AG04449 (cell line): ENCODE measurements at regions of chr3 and their contacts with region 1.

Region 1: DNA sequence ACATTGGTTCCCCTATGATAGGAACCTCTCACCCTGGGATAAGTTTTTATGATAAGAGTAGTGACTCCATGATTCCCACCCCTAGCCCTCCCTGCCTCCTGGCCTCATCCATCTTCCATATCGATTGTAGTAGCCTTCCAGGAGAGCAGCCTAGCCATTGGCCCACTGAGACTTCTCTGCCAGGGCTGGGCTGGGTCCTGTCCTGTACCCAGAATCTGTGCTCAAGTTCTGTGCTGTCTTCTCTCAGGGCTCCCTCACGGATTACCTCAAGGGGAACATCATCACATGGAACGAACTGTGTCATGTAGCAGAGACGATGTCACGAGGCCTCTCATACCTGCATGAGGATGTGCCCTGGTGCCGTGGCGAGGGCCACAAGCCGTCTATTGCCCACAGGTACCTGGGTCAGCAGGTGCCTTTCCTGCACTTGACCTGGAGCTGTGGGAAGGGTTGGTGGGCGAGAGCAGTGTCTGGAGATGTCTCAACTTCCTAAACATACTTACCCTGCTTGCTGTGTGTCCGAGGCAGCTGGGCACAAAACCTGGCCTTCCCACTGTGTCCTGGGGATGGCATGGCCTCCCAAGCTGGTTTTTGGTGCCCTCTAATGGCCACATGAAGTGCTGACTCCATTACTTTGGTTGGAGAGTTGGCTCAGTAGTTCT is 16.6 kb upstream of the EXOG start:
- DNase-seq: no peak
- H3K4me3 ChIP-seq: no peak overlapping the region
- CTCF ChIP-seq: peak; percentile 86

Region 2: GRCh38 chr3:38004415-38005076 is 475.0 kb before region 1 on chr3:
- CTCF ChIA-PET with region 1: interaction called, 15 read pairs
- POLR2A ChIA-PET with region 1: no interaction called
- DNase-seq: no peak
- H3K4me3 ChIP-seq: no peak overlapping the region
- CTCF ChIP-seq: peak; percentile 75

Region 3: DNA sequence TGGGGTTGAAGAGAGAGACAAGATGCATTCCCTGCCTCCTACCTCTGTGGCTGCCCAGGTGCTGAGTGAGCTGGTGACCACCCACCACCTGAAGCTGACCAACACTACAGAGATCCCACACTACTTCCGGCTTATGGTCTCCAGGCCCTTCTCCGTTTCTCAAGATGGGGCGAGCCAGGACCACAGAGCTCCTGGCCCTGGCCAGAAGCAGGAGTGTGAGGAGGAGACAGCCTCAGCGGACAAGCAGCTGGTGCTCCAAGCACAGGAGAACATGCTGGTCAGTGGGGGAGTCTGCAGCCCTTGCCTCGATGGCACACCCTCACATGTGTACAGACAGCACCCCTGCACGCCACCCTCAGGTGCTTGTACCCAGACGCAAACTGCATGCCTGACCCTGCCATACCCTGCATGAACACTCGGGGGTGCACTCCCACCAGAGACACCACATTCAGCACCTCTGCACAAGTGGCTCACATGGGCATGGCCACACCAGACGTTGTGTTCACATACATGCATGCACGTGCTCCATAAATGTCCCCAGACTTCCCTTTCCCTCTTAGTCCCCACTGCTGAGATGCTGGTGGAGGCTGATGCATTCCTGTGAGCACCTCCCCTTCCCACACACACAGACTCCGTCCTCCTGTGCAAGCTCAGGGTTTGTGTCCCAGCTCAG is 361.7 kb before region 1 on chr3:
- CTCF ChIA-PET with region 1: interaction called, 35 read pairs
- POLR2A ChIA-PET with region 1: no interaction called
- DNase-seq: no peak
- H3K4me3 ChIP-seq: no peak overlapping the region
- CTCF ChIP-seq: peak; percentile 84

Region 4: DNA sequence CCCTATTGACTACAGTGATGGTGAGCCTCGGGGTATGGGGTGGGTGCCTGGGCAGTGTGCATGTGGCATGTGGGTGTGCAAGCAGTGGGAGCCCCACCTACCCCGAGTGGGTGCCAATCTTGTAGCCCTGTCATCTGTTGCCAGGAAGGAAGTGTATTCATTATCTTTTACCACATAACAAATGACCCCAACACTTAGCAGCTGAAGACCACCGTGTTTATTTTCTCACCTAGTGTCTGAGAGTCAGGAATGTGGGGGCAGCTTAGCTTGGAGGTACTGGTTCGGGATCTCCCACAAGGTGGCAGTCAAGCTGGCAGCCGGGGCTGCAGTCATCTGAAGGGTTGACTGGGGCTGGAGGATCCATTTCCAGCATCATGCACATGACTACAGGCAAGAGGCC is 111.3 kb before region 1 on chr3:
- CTCF ChIA-PET with region 1: interaction called, 10 read pairs
- POLR2A ChIA-PET with region 1: no interaction called
- DNase-seq: no peak
- H3K4me3 ChIP-seq: no peak overlapping the region
- CTCF ChIP-seq: no peak

Region 5: GRCh38 chr3:38458796-38459498 is 20.6 kb before region 1 on chr3:
- CTCF ChIA-PET with region 1: interaction called, 10 read pairs
- POLR2A ChIA-PET with region 1: no interaction called
- DNase-seq: no peak
- H3K4me3 ChIP-seq: no peak overlapping the region
- CTCF ChIP-seq: no peak

Region 6: DNA sequence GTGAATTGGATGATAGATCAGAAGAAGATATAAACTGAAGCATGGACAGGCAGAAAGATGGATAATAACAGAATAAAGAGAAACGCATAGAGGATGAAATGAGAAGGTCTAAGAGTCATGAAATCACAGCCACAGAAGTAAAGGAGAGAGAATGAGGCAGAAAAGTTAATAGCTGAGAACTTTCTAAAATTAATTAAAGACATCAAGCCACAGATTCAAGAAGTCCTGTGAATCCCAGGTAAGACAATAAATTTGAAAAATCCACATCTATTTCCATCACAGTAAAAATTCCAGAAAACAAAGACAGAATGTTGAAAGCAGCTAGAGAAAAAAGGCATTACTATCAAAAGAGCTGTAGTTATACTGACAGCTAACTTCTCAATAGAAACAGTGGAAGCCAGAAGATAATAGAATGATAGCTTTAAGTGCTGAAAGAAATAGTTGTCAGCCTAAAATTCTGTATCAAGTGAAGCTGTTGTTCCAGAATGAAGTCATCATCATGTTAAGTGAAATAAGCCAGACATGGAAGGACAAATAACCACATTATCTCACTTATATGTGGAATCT is 13.9 kb before region 1 on chr3:
- CTCF ChIA-PET with region 1: interaction called, 60 read pairs
- POLR2A ChIA-PET with region 1: no interaction called
- DNase-seq: no peak
- H3K4me3 ChIP-seq: no peak overlapping the region
- CTCF ChIP-seq: no peak

Region 7: DNA sequence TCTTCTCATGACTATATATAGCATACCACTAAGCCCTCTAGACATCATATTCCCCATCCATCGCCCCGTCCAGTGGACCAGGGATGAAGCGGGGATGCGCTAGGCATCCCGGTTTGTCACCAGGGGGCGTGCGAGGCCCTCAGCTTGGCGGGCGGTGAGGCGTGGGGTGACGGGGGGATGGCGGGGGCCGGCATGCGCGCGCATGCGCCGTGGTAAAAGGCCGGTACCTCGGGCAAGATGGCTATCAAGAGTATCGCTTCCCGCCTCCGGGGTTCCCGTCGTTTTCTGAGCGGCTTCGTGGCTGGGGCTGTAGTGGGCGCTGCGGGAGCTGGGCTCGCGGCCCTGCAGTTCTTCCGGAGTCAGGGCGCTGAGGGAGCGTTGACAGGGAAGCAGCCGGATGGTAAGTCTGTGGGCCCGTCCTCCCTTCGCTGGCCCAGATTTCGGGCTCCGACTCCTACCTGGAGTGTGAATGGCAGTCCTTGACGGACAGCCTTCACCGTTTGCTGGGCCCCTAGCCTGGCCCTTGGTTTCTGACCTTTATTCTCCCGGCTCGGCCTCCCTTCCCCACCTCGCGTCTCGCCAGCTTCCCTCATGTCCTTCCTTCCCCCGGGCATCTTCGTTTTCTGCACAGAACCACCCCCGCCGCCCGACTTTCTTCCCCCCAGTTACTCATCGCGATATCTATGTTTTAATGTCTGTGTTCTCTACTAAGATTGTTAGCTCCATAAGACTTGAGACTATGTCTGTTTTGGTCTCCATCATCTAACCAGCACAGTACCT is 16.8 kb after region 1 on chr3 and contains the start of gene EXOG:
- CTCF ChIA-PET with region 1: interaction called, 88 read pairs
- POLR2A ChIA-PET with region 1: no interaction called
- DNase-seq: peak; percentile 42
- H3K4me3 ChIP-seq: peak within 1 kb of the TSS; percentile 86
- CTCF ChIP-seq: peak; percentile 90